ENCODE measurements at regions of chr10 and their contacts with region 1.

Region 1: GRCh38 chr10:74234569-74234968 is 83.5 kb downstream of the ADK start:
- DNase-seq: peak in 2 of 3 donors; percentile 23 to 26
- H3K4me3 ChIP-seq: no peak overlapping the region
- H3K27ac ChIP-seq: no peak overlapping the region
- H3K4me1 ChIP-seq: peaks cover 0 to 20% (median 8%) of the 10 kb centered on the region in 4 experiments
- H3K27me3 ChIP-seq: no peaks in the 10 kb centered on the region

Region 2: GRCh38 chr10:74107391-74107790 is 127.2 kb before region 1 on chr10:
- CTCF ChIA-PET with region 1: interaction called, 10 read pairs
- POLR2A ChIA-PET with region 1: no interaction called
- DNase-seq: no peak
- H3K4me3 ChIP-seq: no peak overlapping the region
- H3K27ac ChIP-seq: no peak overlapping the region
- H3K4me1 ChIP-seq: no peaks in the 10 kb centered on the region
- H3K27me3 ChIP-seq: no peaks in the 10 kb centered on the region

Region 3: DNA sequence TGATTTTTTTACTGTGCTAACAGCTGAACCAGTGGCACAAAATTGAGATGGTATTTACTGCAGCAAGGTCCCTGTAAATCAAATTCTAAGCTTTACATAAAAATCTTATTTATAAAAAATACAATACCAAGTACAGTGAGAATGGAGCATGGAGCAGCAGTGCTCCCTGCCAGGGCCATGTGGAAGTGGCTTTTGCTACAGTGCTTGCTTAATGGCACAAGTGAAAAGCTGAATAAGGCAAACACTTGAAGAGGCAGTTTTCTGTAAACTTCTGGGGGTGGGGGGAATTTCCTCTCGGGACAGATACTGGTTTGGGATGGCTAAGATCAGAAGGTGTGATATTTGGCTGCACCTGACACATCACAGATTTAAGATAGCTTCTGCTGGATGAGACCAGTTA is 111.5 kb before region 1 on chr10:
- CTCF ChIA-PET with region 1: interaction called, 36 read pairs
- POLR2A ChIA-PET with region 1: no interaction called
- DNase-seq: no peak
- H3K4me3 ChIP-seq: no peak overlapping the region
- H3K27ac ChIP-seq: no peak overlapping the region
- H3K4me1 ChIP-seq: no peaks in the 10 kb centered on the region
- H3K27me3 ChIP-seq: no peaks in the 10 kb centered on the region

Measured in common myeloid progenitor, CD34-positive (primary cell).